ENCODE measurements at regions of chr9 and their contacts with region 1.

Region 1: GRCh38 chr9:136170006-136170901 is 34.7 kb downstream of the LHX3 start:
- DNase-seq: no peak

Region 2: GRCh38 chr9:136283291-136284235 is 113.3 kb after region 1 on chr9:
- intact Hi-C with region 1: loop called (anchors 1 kb)
- DNase-seq: peak; percentile 85

Region 3: DNA sequence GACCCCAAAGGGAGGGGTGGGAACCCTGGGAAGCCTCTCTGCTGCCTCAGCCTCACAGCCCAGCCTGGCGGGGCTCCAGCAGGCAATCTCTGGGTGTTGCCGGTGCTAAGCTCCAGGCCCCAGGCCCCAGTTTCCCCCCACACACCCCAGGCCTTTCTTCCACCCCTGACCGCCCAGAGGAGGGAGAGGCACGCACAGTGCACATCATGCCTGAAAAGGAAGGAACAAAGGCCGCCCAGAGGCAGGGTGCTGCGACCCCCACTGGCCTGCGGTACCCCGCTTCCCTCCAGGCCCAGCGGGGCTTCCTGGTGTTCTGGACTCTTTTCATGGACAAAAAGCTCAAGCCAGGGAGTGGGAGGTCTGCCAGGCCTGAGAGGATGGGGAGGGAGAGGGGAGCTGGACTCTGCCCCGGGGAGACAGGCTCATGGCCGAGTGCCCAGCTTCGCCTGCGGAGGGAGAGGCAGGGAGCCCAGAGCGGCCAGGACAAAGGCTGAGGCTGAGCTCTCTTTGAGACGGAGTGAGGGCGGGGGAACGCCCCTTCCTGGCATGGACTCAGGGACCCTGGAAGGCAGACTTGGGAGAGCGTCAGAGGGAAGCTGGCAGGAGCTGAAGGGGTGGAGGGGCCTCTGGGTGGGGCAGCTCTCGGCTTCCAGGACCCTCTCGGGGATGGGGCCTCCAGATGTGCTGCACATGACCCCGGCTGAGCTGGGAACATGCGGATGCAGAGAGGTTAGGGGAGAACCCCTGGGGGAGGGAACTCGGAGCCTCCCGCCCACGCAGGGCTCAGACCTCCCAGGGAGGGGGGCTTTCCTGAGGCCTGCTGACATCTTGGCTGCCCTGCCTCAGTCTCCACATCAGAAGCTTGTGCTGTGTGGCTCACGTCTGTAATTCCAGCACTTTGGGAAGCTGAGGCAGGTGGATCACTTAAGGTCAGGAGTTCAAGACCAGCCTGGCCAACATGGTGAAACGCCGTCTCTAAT is 885.4 kb after region 1 on chr9:
- intact Hi-C with region 1: no loop called
- DNase-seq: peak; percentile 92